Natural killer cell (primary cell): ENCODE measurements at regions of chr11 and their contacts with region 1.

Region 1: DNA sequence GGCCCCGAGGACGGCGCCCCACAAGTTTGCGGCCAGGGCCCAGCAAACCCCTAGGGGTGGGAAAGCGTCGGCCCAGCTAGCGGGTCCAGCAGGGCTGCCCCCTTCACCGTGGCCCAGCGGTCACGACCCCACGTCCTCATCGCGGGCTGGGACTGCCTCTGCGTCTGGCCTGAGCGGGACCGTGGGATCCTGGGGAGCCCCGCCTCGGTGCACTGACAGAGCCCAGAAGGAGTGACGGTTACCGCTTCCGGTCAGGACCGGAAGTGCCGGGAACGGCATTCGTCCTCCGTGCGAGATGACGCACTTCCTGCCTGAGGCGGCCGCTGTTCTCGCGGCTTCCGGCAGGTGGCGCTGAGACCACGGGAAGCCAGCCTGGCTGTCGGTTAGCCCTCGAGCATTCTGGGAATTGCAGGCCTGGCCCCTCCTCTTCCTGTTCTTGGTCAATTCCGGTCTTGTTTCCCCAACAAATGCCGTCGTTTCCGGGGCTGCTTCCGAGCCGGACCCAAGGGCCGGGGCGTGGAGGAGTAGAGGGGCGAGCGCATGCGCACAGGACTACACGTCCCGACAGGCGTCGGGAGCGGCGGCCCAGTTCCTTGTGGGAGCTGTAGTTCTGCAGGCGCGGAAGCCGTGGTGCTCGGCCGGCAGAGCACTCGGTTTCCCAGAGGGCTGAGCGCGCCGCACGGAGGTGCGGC is at the start of gene TSSC4:
- DNase-seq: peak; percentile 100
- ATAC-seq: peak; percentile 85 to 93 (median 87)
- H3K4me3 ChIP-seq: peak within 1 kb of the TSS; percentile 88
- H3K4me3 Mint-ChIP-seq: peak within 1 kb of the TSS; percentile 98
- H3K27ac ChIP-seq: peak within 1 kb of the TSS; percentile 98
- H3K27ac Mint-ChIP-seq: peak within 1 kb of the TSS; percentile 86 to 92
- H3K4me1 ChIP-seq: peaks cover 28% of the 10 kb centered on the region
- H3K4me1 Mint-ChIP-seq: peaks cover 12 to 20% of the 10 kb centered on the region in 2 donors
- H3K27me3 ChIP-seq: no peaks in the 10 kb centered on the region
- H3K27me3 Mint-ChIP-seq: no peaks in the 10 kb centered on the region
- CTCF ChIP-seq: peak; percentile 90
- total RNA-seq, gene TSSC4: 52.8 to 67.9 (median 59.3) TPM

Region 2: DNA sequence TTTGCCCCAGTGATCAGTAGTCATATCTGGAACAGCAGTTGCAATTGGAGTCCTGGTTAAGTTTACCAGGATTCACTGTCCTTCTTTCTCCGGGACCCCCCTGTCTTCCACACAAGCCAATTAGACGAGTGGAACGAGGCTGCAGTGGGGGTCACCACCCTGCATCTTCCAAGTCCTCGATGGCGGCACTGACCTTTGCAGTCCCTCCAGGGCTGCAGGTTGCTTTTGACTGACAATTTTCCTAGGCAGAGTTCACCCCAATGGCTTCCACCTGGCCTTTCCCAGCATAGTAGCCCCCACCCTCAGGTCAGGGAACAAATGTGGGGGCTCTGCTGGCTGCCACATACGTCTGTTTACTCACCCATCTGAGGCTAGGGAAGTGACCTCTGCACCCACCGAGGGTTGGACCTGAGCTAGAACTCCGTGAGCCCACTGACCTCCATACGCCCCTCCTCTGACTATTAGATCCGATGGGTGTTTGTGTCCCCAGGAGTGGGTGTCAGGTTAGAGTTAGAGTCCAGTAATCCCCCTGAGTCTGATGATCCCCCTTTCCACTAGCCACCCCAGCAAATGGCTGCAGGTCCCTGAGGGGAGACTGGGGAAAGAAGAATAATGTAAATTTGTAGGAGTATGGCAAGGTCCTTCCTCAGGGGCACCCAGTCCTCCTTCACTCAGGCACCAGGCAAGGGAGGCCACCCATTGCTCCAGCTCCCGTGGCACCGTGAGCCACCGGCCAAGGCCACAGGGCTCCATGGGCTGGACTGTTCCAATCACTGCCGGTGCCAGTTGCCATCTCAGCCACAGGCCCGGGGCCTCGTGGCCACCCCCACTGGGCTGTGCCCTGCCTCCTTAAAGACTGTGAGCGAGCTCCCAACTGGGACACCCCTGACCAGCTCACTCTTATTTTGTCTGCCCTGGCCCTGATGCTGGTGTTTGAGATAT is 104.0 kb before region 1 on chr11:
- intact Hi-C with region 1: no loop called
- DNase-seq: peak in 1 of 2 donors; percentile 9
- ATAC-seq: no peak
- H3K4me3 ChIP-seq: no peak overlapping the region
- H3K4me3 Mint-ChIP-seq: no peak overlapping the region
- H3K27ac ChIP-seq: no peak overlapping the region
- H3K27ac Mint-ChIP-seq: peak overlapping the region; percentile 46 to 94
- H3K4me1 ChIP-seq: peaks cover 76% of the 10 kb centered on the region
- H3K4me1 Mint-ChIP-seq: peaks cover 31 to 73% of the 10 kb centered on the region in 2 donors
- H3K27me3 ChIP-seq: no peaks in the 10 kb centered on the region
- H3K27me3 Mint-ChIP-seq: no peaks in the 10 kb centered on the region
- CTCF ChIP-seq: no peak

Region 3: GRCh38 chr11:2377511-2378443 is 22.4 kb before region 1 on chr11:
- intact Hi-C with region 1: loop called (anchors 1 kb)
- DNase-seq: peak in 1 of 2 donors; percentile 77
- ATAC-seq: peak; percentile 34 to 48 (median 34)
- H3K4me3 ChIP-seq: peak overlapping the region; percentile 95
- H3K4me3 Mint-ChIP-seq: peak overlapping the region; percentile 88
- H3K27ac ChIP-seq: peak overlapping the region; percentile 73
- H3K27ac Mint-ChIP-seq: peak overlapping the region; percentile 71 to 88
- H3K4me1 ChIP-seq: peaks cover 56% of the 10 kb centered on the region
- H3K4me1 Mint-ChIP-seq: peaks cover 30 to 55% of the 10 kb centered on the region in 2 donors
- H3K27me3 ChIP-seq: no peaks in the 10 kb centered on the region
- H3K27me3 Mint-ChIP-seq: peaks cover 0 to 3% of the 10 kb centered on the region in 2 donors
- CTCF ChIP-seq: no peak